ENCODE measurements at regions of chr19 and their contacts with region 1.

Region 1: DNA sequence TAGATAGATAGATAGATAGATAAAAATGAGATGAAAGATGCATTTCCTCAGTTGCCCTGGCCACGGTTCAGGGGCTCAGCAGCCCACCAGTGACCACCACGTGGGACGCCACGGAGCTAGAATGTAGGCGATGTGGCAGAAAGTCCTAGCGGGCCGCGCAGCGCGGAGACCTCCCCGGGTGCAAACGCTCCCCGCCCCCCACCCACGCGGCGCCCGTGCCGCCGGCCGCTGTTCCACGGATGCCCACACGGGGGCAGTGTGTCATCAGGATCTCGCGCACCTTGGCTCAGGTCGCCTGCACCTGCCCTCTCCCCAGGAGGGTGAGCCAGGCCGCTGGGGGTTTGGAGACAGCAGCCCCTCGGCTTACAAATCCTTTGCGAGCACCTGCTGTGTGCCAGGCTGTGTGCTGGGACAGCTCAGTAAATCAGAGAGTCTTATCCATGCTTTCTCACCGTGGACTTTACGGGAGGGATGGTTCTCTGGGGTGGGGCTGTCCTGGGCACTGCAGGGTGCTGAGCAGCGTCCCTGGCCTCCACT is 13.7 kb upstream of the TLE5 start:
- DNase-seq: peak; percentile 87
- ATAC-seq: peak; percentile 92
- H3K4me3 ChIP-seq: peak overlapping the region in 1 of 5 experiments; percentile 40
- H3K4me3 Mint-ChIP-seq: no peak overlapping the region
- H3K27ac ChIP-seq: no peak overlapping the region
- H3K27ac Mint-ChIP-seq: no peak overlapping the region
- H3K4me1 ChIP-seq: peaks cover 0 to 13% of the 10 kb centered on the region in 2 donors
- H3K4me1 Mint-ChIP-seq: peaks cover 9% of the 10 kb centered on the region
- H3K27me3 ChIP-seq: peaks cover 0 to 8% (median 2%) of the 10 kb centered on the region in 4 experiments
- H3K27me3 Mint-ChIP-seq: no peaks in the 10 kb centered on the region
- CTCF ChIP-seq: peak; percentile 88

Region 2: DNA sequence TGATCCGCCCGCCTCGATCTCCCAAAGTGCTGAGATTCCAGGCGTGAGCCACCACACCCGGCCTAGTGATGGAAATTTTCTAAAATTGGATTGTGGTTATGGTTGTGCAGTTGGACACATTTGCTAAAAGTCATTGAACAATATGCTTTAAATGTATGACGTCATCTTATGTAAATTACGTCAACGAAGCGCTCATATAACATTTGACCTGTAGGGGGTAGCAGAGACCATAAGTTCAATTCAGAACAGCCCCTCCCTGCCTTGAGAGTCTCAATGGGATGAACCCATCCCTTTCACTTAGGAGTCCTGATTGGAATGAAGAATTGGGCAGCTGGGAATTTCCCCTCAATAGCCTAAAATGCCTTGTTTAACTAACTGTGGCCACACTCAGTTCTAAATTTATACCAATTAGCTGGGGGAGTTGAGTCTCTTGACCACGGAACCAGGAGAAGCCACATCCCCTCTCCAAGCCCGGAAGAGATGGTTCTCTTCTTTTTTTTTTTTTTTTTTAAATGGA is 113.9 kb before region 1 on chr19:
- CTCF ChIA-PET with region 1: interaction called, 16 read pairs
- POLR2A ChIA-PET with region 1: no interaction called
- intact Hi-C with region 1: loop called (anchors 10 kb)
- DNase-seq: peak; percentile 91
- ATAC-seq: peak; percentile 73
- H3K4me3 ChIP-seq: peak overlapping the region in 3 of 5 experiments; percentile 2 to 33 (median 9)
- H3K4me3 Mint-ChIP-seq: peak overlapping the region; percentile 2
- H3K27ac ChIP-seq: no peak overlapping the region
- H3K27ac Mint-ChIP-seq: peak overlapping the region; percentile 71
- H3K4me1 ChIP-seq: peaks cover 13 to 18% of the 10 kb centered on the region in 2 donors
- H3K4me1 Mint-ChIP-seq: peaks cover 14% of the 10 kb centered on the region
- H3K27me3 ChIP-seq: no peaks in the 10 kb centered on the region
- H3K27me3 Mint-ChIP-seq: no peaks in the 10 kb centered on the region
- CTCF ChIP-seq: peak; percentile 82

Region 3: GRCh38 chr19:3062168-3063102 is 13.5 kb before region 1 on chr19 and contains the start of gene TLE5:
- CTCF ChIA-PET with region 1: interaction called, 15 read pairs
- POLR2A ChIA-PET with region 1: interaction called, 4 read pairs
- intact Hi-C with region 1: no loop called
- DNase-seq: peak; percentile 84
- ATAC-seq: peak; percentile 48
- H3K4me3 ChIP-seq: peak within 1 kb of the TSS; percentile 44 to 85 (median 80)
- H3K4me3 Mint-ChIP-seq: peak within 1 kb of the TSS; percentile 92
- H3K27ac ChIP-seq: peak within 1 kb of the TSS; percentile 83 to 90
- H3K27ac Mint-ChIP-seq: peak within 1 kb of the TSS; percentile 95
- H3K4me1 ChIP-seq: peaks cover 46 to 76% of the 10 kb centered on the region in 2 donors
- H3K4me1 Mint-ChIP-seq: peaks cover 61% of the 10 kb centered on the region
- H3K27me3 ChIP-seq: no peaks in the 10 kb centered on the region
- H3K27me3 Mint-ChIP-seq: no peaks in the 10 kb centered on the region
- CTCF ChIP-seq: no peak
- total RNA-seq, gene TLE5: 665 and 697 TPM in 2 replicates

Region 4: GRCh38 chr19:3094601-3095437 is 18.9 kb after region 1 on chr19:
- CTCF ChIA-PET with region 1: interaction called, 6 read pairs
- POLR2A ChIA-PET with region 1: no interaction called
- intact Hi-C with region 1: loop called (anchors 1 kb)
- DNase-seq: peak; percentile 70
- ATAC-seq: peak; percentile 37
- H3K4me3 ChIP-seq: peak overlapping the region in 4 of 5 experiments; percentile 41 to 71 (median 58)
- H3K4me3 Mint-ChIP-seq: peak overlapping the region; percentile 84
- H3K27ac ChIP-seq: no peak overlapping the region
- H3K27ac Mint-ChIP-seq: peak overlapping the region; percentile 46
- H3K4me1 ChIP-seq: peaks cover 35 to 46% of the 10 kb centered on the region in 2 donors
- H3K4me1 Mint-ChIP-seq: peaks cover 28% of the 10 kb centered on the region
- H3K27me3 ChIP-seq: peaks cover 0 to 24% (median 10%) of the 10 kb centered on the region in 4 experiments
- H3K27me3 Mint-ChIP-seq: peaks cover 8% of the 10 kb centered on the region
- CTCF ChIP-seq: no peak

Region 5: DNA sequence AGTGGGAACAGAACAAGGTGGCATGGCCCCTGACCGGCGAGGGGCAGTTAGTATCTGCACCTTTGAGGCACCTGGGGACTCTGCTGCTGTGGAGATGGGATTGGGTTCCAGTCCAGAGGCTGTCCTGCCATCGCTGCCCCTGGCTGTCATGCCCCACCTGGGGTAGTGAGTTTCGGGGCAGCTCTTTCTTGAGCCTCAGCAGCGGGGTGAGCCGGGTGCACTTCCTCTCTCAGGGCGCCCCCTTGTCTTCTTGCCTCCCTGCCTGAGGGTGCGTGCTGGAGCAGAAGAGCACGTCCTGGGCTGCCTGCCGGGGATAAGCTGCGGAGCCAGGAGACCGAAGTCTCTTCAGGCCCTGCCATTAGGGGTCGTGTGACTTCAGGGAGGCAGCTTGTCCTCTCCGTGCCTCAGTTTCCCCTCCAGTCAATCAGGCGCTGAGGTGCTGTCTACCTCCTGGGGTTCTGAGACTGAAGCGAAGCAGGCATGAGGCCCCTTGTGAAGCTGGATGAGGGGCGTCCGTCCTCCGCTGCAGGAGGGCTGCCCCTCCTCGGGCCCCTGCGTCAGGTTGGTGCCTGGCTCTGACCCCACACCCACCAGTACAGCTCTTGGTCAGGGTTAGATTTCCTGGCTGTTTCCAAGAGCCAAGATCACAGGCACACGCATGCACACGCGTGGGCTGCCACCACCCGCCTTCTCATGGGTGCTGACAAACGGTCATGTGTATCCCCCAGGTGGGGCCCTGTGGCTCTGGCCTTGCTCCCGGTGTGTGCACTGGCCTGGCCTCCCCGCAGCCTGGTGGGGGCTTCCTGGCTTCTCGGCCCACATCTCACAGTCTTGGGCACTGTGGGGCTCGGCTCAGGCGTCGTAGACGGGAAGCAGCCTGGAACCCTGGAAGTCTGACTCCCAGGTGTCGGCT is 26.5 kb after region 1 on chr19:
- CTCF ChIA-PET with region 1: interaction called, 73 read pairs
- POLR2A ChIA-PET with region 1: interaction called, 5 read pairs
- intact Hi-C with region 1: loop called (anchors 1 kb)
- DNase-seq: no peak
- ATAC-seq: no peak
- H3K4me3 ChIP-seq: no peak overlapping the region
- H3K4me3 Mint-ChIP-seq: no peak overlapping the region
- H3K27ac ChIP-seq: no peak overlapping the region
- H3K27ac Mint-ChIP-seq: no peak overlapping the region
- H3K4me1 ChIP-seq: peaks cover 20 to 33% of the 10 kb centered on the region in 2 donors
- H3K4me1 Mint-ChIP-seq: peaks cover 20% of the 10 kb centered on the region
- H3K27me3 ChIP-seq: peaks cover 0 to 10% (median 2%) of the 10 kb centered on the region in 4 experiments
- H3K27me3 Mint-ChIP-seq: peaks cover 5% of the 10 kb centered on the region
- CTCF ChIP-seq: no peak

Region 6: GRCh38 chr19:3830621-3831589 is 754.9 kb after region 1 on chr19:
- CTCF ChIA-PET with region 1: no interaction called
- POLR2A ChIA-PET with region 1: no interaction called
- intact Hi-C with region 1: no loop called
- DNase-seq: no peak
- ATAC-seq: no peak
- H3K4me3 ChIP-seq: no peak overlapping the region
- H3K4me3 Mint-ChIP-seq: no peak overlapping the region
- H3K27ac ChIP-seq: no peak overlapping the region
- H3K27ac Mint-ChIP-seq: no peak overlapping the region
- H3K4me1 ChIP-seq: no peaks in the 10 kb centered on the region
- H3K4me1 Mint-ChIP-seq: peaks cover 4% of the 10 kb centered on the region
- H3K27me3 ChIP-seq: peaks cover 0 to 3% (median 0%) of the 10 kb centered on the region in 4 experiments
- H3K27me3 Mint-ChIP-seq: peaks cover 11% of the 10 kb centered on the region
- CTCF ChIP-seq: no peak

Measured in B cell (primary cell).